CD4-positive, alpha-beta memory T cell (primary cell): ENCODE measurements at regions of chr10 and their contacts with region 1.

Region 1: DNA sequence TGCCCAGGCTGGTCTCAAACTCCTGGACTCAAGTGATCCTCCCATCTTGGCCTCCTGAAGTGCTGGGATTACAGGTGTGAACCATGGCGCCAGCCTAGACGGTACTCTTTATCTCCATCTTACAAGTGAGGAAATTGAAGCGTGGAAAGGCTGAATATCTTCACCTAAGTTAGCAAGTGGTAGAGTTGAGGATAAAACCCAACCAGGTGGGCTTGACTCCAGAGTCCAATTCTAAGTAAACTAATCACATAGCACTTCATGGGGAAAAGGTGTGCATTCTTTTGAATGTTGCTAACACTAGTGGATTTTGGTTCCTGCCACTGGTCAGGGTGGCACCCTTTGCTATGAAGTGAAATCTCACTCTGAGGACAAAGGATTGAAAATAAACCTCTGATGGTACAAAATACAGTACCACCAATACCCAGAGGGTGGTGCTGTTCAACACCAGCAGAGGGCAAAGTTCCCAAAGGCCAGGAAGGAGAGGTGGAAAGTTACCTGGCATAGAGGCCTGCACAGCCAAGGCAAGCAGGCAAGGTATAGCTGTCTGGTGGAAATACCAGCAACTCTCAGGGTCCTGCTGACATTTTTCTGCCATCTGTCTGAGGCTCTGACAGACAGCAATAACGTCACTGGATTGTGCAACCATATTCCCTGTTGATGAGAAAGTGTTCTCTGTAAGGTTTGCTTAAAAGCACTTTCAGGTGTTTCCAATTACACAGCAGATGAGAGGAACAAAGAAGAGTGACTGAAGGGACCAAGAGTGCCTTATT is 17.6 kb downstream of the ZDHHC16 start:
- DNase-seq: peak; percentile 31 to 52 (median 42)
- H3K4me3 ChIP-seq: no peak overlapping the region
- H3K4me3 Mint-ChIP-seq: no peak overlapping the region
- H3K27ac ChIP-seq: no peak overlapping the region
- H3K27ac Mint-ChIP-seq: peak overlapping the region; percentile 12 to 77 (median 37)
- H3K4me1 ChIP-seq: no peaks in the 10 kb centered on the region
- H3K4me1 Mint-ChIP-seq: peaks cover 0 to 2% (median 0%) of the 10 kb centered on the region in 4 donors
- H3K27me3 ChIP-seq: no peaks in the 10 kb centered on the region
- H3K27me3 Mint-ChIP-seq: no peaks in the 10 kb centered on the region

Region 2: GRCh38 chr10:97292097-97292862 is 171.3 kb before region 1 on chr10 and contains the start of gene ARHGAP19:
- CTCF ChIA-PET with region 1: no interaction called
- POLR2A ChIA-PET with region 1: no interaction called
- intact Hi-C with region 1: no loop called
- DNase-seq: peak; percentile 94 to 98 (median 95)
- H3K4me3 ChIP-seq: peak within 1 kb of the TSS; percentile 76 to 85
- H3K4me3 Mint-ChIP-seq: peak within 1 kb of the TSS; percentile 90 to 99 (median 94)
- H3K27ac ChIP-seq: peak within 1 kb of the TSS; percentile 78
- H3K27ac Mint-ChIP-seq: peak within 1 kb of the TSS; percentile 85 to 97 (median 95)
- H3K4me1 ChIP-seq: peaks cover 11% of the 10 kb centered on the region
- H3K4me1 Mint-ChIP-seq: peaks cover 8 to 25% (median 20%) of the 10 kb centered on the region in 4 donors
- H3K27me3 ChIP-seq: no peaks in the 10 kb centered on the region
- H3K27me3 Mint-ChIP-seq: peaks cover 1 to 3% of the 10 kb centered on the region in 2 donors
- total RNA-seq, gene ARHGAP19: 17.0 to 19.3 TPM

Region 3: GRCh38 chr10:97407211-97407951 is 56.2 kb before region 1 on chr10:
- CTCF ChIA-PET with region 1: interaction called, 6 read pairs
- POLR2A ChIA-PET with region 1: no interaction called
- intact Hi-C with region 1: loop called (anchors 5 kb)
- DNase-seq: peak; percentile 74 to 78 (median 77)
- H3K4me3 ChIP-seq: peak overlapping the region; percentile 35 to 48
- H3K4me3 Mint-ChIP-seq: peak overlapping the region in 7 of 8 donors; percentile 36 to 77 (median 74)
- H3K27ac ChIP-seq: no peak overlapping the region
- H3K27ac Mint-ChIP-seq: peak overlapping the region; percentile 54 to 88 (median 78)
- H3K4me1 ChIP-seq: peaks cover 6% of the 10 kb centered on the region
- H3K4me1 Mint-ChIP-seq: peaks cover 3 to 12% (median 9%) of the 10 kb centered on the region in 4 donors
- H3K27me3 ChIP-seq: no peaks in the 10 kb centered on the region
- H3K27me3 Mint-ChIP-seq: no peaks in the 10 kb centered on the region